ENCODE measurements at regions of chr1 and their contacts with region 1.

Region 1: GRCh38 chr1:230581446-230582079 is 60.7 kb upstream of the COG2 start:
- DNase-seq: peak in 1 of 2 experiments; percentile 67
- H3K4me3 ChIP-seq: no peak overlapping the region
- H3K27ac ChIP-seq: no peak overlapping the region
- H3K4me1 ChIP-seq: peaks cover 0 to 3% (median 0%) of the 10 kb centered on the region in 4 experiments; a peak in 1 of 7 replicates
- H3K27me3 ChIP-seq: no peaks in the 10 kb centered on the region
- CTCF ChIP-seq: peak; percentile 24 to 73 (median 53)
- EP300 ChIP-seq: no peak
- POLR2A ChIP-seq: no peak
- RAD21 ChIP-seq: peak; percentile 70 to 75

Region 2: DNA sequence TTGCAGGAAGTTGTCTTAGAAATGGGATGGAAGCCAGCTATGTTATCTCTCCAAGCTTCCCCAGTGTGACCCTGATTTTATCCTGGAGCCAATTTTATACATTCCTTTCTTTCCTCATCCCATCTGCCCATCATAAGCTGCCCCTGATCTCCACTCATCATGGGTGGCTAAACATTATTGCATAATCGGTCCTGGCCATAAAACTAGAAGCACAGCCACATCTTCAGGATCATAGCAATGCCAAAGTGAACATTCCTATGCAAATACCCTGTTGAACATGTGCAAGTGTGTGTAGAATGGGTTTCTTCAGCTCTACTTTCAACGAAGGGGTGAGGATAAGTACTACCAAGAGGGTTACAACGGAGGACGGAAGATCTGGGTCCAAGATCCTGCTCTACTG is 10.1 kb after region 1 on chr1:
- CTCF ChIA-PET with region 1: interaction called, 22 read pairs
- POLR2A ChIA-PET with region 1: no interaction called
- DNase-seq: no peak
- H3K4me3 ChIP-seq: no peak overlapping the region
- H3K27ac ChIP-seq: no peak overlapping the region
- H3K4me1 ChIP-seq: no peaks in the 10 kb centered on the region
- H3K27me3 ChIP-seq: no peaks in the 10 kb centered on the region
- CTCF ChIP-seq: no peak
- EP300 ChIP-seq: no peak
- POLR2A ChIP-seq: no peak
- RAD21 ChIP-seq: no peak